Activated CD8-positive, alpha-beta T cell treated with anti-CD3 and anti-CD28 coated beads, Interleukin-2, amount 10 ng/mL, durations not matched to agents 7 days and 5 days (primary cell): ENCODE measurements at regions of chr11 and their contacts with region 1.

Region 1: GRCh38 chr11:88337181-88337986 is at the start of gene CTSC:
- DNase-seq: peak; percentile 98
- ATAC-seq: peak; percentile 93
- H3K4me3 Mint-ChIP-seq: peak within 1 kb of the TSS; percentile 97
- H3K27ac Mint-ChIP-seq: peak within 1 kb of the TSS; percentile 96
- H3K4me1 Mint-ChIP-seq: peaks cover 61% of the 10 kb centered on the region
- H3K27me3 Mint-ChIP-seq: no peaks in the 10 kb centered on the region
- total RNA-seq, gene CTSC: 211 to 219 TPM

Region 2: DNA sequence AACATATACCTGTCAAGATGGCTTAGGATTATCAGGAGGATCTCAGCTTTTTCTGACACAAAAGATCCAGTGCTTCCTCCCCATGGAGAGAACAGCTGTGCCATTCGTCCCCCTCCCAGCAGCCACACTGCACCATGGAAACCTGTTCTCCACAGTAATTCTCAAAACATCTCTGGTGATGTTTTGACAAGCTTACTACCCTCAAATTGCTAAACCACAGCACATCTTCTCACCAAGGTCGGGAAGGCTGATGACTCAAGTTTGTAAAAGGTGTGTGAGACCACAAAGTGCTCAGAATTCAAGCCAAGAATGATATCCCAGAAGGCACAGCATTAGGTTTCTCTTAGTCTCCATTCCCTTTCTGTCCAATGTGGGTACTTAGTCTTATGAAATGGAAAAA is 158.2 kb before region 1 on chr11:
- CTCF ChIA-PET with region 1: interaction called, 3 read pairs
- POLR2A ChIA-PET with region 1: interaction called, 10 read pairs
- DNase-seq: peak; percentile 53
- ATAC-seq: peak; percentile 54
- H3K4me3 Mint-ChIP-seq: no peak overlapping the region
- H3K27ac Mint-ChIP-seq: peak overlapping the region; percentile 47
- H3K4me1 Mint-ChIP-seq: peaks cover 43% of the 10 kb centered on the region
- H3K27me3 Mint-ChIP-seq: peaks cover 17% of the 10 kb centered on the region

Region 3: GRCh38 chr11:88327061-88327460 is 10.3 kb before region 1 on chr11:
- CTCF ChIA-PET with region 1: interaction called, 6 read pairs
- POLR2A ChIA-PET with region 1: interaction called, 25 read pairs
- DNase-seq: no peak
- ATAC-seq: no peak
- H3K4me3 Mint-ChIP-seq: no peak overlapping the region
- H3K27ac Mint-ChIP-seq: no peak overlapping the region
- H3K4me1 Mint-ChIP-seq: peaks cover 90% of the 10 kb centered on the region
- H3K27me3 Mint-ChIP-seq: no peaks in the 10 kb centered on the region

Region 4: GRCh38 chr11:88357323-88358039 is 20.1 kb after region 1 on chr11:
- CTCF ChIA-PET with region 1: interaction called, 14 read pairs
- POLR2A ChIA-PET with region 1: interaction called, 48 read pairs
- DNase-seq: no peak
- ATAC-seq: peak; percentile 42
- H3K4me3 Mint-ChIP-seq: peak overlapping the region; percentile 29
- H3K27ac Mint-ChIP-seq: peak overlapping the region; percentile 81
- H3K4me1 Mint-ChIP-seq: peaks cover 53% of the 10 kb centered on the region
- H3K27me3 Mint-ChIP-seq: no peaks in the 10 kb centered on the region

Region 5: GRCh38 chr11:88414981-88415391 is 77.6 kb after region 1 on chr11:
- CTCF ChIA-PET with region 1: interaction called, 4 read pairs
- POLR2A ChIA-PET with region 1: interaction called, 12 read pairs
- DNase-seq: peak; percentile 78
- ATAC-seq: peak; percentile 81
- H3K4me3 Mint-ChIP-seq: peak overlapping the region; percentile 60
- H3K27ac Mint-ChIP-seq: peak overlapping the region; percentile 91
- H3K4me1 Mint-ChIP-seq: peaks cover 74% of the 10 kb centered on the region
- H3K27me3 Mint-ChIP-seq: no peaks in the 10 kb centered on the region